HEK293 (cell line): ENCODE measurements at regions of chr4 and their contacts with region 1.

Region 1: GRCh38 chr4:88514557-88515511 is 8.7 kb downstream of the PYURF start:
- H3K4me3 ChIP-seq: no peak overlapping the region
- H3K27ac ChIP-seq: no peak overlapping the region
- H3K4me1 ChIP-seq: no peaks in the 10 kb centered on the region
- CTCF ChIP-seq: no peak

Region 2: GRCh38 chr4:88369936-88370335 is 144.9 kb before region 1 on chr4:
- CTCF ChIA-PET with region 1: interaction called, 24 read pairs
- POLR2A ChIA-PET with region 1: no interaction called
- H3K4me3 ChIP-seq: no peak overlapping the region
- H3K27ac ChIP-seq: no peak overlapping the region
- H3K4me1 ChIP-seq: no peaks in the 10 kb centered on the region
- CTCF ChIP-seq: no peak

Region 3: DNA sequence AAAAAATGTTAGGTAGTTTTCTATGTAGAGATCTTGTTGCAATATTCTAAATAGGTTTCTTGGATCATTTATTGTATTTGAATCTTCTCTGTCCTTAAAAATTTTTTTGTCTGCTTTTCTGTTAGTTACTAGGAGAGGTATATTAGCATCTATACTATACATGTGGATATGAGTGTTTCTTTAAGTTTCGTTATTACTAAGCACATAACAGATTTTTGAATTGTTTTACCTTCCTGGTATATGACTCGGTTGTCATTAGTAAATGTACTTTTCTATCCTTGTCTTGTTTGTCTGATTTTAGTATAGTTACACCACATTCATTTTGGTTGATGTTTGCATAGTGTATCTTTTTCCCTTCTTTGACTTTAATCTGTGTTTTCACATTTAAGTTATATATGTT is 11.5 kb before region 1 on chr4:
- CTCF ChIA-PET with region 1: interaction called, 40 read pairs
- POLR2A ChIA-PET with region 1: interaction called, 3 read pairs
- H3K4me3 ChIP-seq: no peak overlapping the region
- H3K27ac ChIP-seq: no peak overlapping the region
- H3K4me1 ChIP-seq: no peaks in the 10 kb centered on the region
- CTCF ChIP-seq: no peak